GM18951 (cell line): ENCODE measurements at regions of chr12 and their contacts with region 1.

Region 1: DNA sequence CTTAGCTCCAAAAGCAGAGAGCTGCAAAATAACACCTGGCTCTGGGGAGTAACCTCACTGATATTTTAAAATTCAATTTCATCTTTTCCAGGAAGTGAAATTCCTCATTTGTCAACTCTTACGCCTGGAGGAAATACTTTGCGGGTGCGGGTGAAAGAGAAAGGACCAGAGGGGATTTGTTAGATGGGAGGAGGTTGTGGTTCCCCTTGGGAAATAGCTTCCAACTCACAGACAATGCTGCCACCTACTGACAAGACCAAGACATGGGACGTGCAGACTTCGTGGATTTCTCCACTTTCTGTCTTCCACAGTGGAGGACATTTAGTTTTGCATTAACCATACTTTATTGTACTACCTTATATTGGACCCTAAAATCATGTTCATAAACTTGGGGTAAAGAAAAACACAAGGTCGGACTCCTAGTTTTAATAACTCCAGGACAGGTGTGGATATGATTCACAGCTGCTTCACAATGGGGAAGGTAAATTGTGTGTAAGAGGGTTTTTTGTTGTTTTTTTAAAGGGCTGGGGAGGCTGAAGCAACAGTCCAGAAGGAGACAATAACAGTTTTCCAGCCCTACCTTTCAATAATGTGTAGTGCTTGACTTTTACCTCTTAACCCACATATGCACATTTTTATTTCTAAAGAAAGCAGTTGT is 10.8 kb downstream of the FBXL14 start:
- POLR2A ChIP-seq: no peak

Region 2: GRCh38 chr12:1122786-1123185 is 460.8 kb before region 1 on chr12:
- in situ Hi-C with region 1: loop called (anchors 10 kb)
- POLR2A ChIP-seq: no peak

Region 3: GRCh38 chr12:1147821-1148220 is 435.7 kb before region 1 on chr12:
- in situ Hi-C with region 1: no loop called
- POLR2A ChIP-seq: no peak

Region 4: GRCh38 chr12:1517007-1517406 is 66.5 kb before region 1 on chr12:
- in situ Hi-C with region 1: loop called (anchors 5 kb)
- POLR2A ChIP-seq: no peak